H1 (cell line): ENCODE measurements at regions of chr2 and their contacts with region 1.

Region 1: DNA sequence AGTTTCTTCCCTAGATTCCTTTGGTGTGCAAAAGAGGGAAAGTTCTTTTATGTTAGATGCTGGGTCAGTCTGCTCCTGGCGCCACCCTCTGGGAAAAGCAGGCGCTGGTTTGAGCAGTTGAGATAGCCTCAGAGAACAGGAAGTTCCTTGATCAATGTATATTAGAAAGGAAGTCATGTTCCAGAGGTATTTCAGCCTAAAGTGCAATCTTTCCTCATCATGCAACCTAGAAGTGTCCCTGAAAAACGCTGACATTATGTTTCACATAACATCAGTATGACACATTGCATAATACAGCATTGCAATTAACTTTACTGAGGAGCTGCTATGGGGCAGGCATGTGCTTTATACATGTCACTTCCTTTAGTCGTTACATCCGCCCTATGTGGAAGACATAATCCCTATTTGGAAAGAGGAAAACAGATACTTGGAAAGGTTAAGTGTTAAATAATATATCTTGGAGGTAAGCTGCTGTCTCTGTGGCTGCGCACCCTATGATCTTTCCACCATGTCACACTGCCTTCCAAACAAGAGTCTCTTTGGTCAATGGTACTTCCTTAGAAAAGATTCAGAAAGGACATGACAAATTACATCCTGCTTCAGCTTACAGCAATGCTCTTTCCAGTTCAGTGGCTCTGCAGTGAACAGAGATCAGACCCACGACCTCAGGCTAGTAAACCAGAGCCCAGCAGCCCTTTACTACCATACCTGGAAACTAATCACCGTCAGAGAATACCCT is 369.7 kb downstream of the RAD51AP2 start:
- DNase-seq: peak; percentile 21 to 56
- H3K4me3 ChIP-seq: no peak overlapping the region
- H3K27ac ChIP-seq: no peak overlapping the region
- H3K4me1 ChIP-seq: peaks cover 0 to 3% (median 0%) of the 10 kb centered on the region in 4 experiments; a peak in 2 of 7 replicates
- H3K27me3 ChIP-seq: no peaks in the 10 kb centered on the region
- CTCF ChIP-seq: peak; percentile 54 to 65 (median 60)
- EP300 ChIP-seq: no peak
- POLR2A ChIP-seq: no peak
- RAD21 ChIP-seq: peak; percentile 71 to 73

Region 2: DNA sequence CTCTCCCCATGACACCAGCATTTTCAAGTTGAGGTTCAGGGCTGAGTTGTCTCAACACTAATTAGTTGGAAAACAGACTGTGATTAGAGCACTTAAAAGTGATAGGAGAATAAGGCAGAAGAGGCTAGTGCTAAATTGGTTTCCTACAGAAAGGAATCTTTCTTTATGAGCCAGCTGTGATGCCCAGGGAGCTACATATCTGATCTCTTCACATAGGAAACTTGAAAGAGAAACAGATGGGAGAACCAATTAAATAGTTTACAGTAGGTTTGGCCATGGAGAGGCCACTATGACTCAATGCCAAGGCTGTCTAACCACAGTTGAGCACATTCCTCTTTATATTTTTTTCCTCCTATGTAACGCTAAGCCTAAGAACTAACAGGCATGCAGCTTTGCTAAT is 64.7 kb before region 1 on chr2:
- CTCF ChIA-PET with region 1: no interaction called
- POLR2A ChIA-PET with region 1: no interaction called
- DNase-seq: no peak
- H3K4me3 ChIP-seq: no peak overlapping the region
- H3K27ac ChIP-seq: no peak overlapping the region
- H3K4me1 ChIP-seq: no peaks in the 10 kb centered on the region
- H3K27me3 ChIP-seq: no peaks in the 10 kb centered on the region
- CTCF ChIP-seq: no peak
- EP300 ChIP-seq: no peak
- POLR2A ChIP-seq: no peak
- RAD21 ChIP-seq: no peak

Region 3: DNA sequence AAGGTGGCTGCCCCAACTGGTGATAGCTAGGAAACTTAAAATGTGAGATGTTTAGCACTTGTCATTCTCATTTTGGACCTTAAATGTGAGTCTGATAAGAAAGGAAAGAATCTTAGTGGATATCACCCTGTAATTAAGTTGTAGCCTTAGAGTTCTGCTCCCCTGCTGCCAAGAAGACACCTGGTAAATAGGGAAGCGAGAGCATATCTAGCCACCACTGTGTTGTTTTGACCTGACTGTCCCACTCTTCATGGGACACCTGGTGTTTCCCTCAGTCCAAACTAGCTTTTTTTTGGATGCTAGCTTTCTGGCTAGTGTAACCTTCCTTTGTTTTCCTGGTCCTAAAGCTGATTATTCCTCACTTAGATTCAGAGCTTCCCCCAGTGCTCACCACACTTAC is 12.0 kb after region 1 on chr2:
- CTCF ChIA-PET with region 1: interaction called, 10 read pairs
- POLR2A ChIA-PET with region 1: no interaction called
- DNase-seq: no peak
- H3K4me3 ChIP-seq: no peak overlapping the region
- H3K27ac ChIP-seq: no peak overlapping the region
- H3K4me1 ChIP-seq: no peaks in the 10 kb centered on the region
- H3K27me3 ChIP-seq: no peaks in the 10 kb centered on the region
- CTCF ChIP-seq: no peak
- EP300 ChIP-seq: no peak
- POLR2A ChIP-seq: no peak
- RAD21 ChIP-seq: no peak

Region 4: GRCh38 chr2:17522303-17522702 is 373.7 kb after region 1 on chr2:
- CTCF ChIA-PET with region 1: no interaction called
- POLR2A ChIA-PET with region 1: no interaction called
- DNase-seq: no peak
- H3K4me3 ChIP-seq: no peak overlapping the region
- H3K27ac ChIP-seq: no peak overlapping the region
- H3K4me1 ChIP-seq: peaks cover 0 to 4% (median 1%) of the 10 kb centered on the region in 4 experiments; a peak in 3 of 7 replicates
- H3K27me3 ChIP-seq: no peaks in the 10 kb centered on the region
- CTCF ChIP-seq: no peak
- EP300 ChIP-seq: no peak
- POLR2A ChIP-seq: no peak
- RAD21 ChIP-seq: no peak